ENCODE measurements at regions of chr10 and their contacts with region 1.

Region 1: DNA sequence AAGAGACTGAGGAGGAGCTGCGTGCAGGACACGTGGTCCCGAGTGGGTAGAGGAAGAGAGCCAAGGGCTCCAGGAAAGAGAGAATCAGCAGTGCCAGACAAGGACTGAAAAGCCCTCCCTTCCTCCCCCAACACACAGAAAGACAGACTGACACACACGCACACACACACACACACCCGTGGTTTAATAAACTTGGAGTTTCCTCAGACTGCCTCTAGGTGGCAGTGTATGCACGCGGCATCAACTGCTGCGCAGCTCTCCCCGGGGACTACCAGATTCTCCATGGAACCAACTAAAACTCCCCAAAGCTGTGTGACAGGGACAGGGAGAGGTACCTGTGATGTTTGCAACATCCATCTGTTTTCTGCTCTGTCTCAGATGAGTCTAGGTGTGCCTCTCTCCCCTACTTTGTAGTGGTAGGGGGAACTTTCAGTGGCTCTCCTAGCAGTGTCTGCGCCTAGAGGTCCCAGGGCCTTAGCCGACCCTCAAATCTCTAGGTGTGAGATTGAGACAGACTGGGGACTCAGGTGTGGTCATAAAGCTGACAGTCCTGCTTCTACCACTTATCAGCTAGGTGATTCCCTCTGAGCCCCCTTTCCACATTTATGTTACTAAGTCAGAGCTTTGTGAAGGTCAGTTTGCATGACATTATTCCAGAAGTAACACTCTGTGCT is 9.3 kb upstream of the TSPAN14 start:
- DNase-seq: peak; percentile 66
- H3K4me3 Mint-ChIP-seq: no peak overlapping the region
- H3K27ac Mint-ChIP-seq: no peak overlapping the region
- H3K4me1 Mint-ChIP-seq: peaks cover 10% of the 10 kb centered on the region
- H3K27me3 Mint-ChIP-seq: no peaks in the 10 kb centered on the region
- CTCF ChIP-seq: peak; percentile 77

Region 2: DNA sequence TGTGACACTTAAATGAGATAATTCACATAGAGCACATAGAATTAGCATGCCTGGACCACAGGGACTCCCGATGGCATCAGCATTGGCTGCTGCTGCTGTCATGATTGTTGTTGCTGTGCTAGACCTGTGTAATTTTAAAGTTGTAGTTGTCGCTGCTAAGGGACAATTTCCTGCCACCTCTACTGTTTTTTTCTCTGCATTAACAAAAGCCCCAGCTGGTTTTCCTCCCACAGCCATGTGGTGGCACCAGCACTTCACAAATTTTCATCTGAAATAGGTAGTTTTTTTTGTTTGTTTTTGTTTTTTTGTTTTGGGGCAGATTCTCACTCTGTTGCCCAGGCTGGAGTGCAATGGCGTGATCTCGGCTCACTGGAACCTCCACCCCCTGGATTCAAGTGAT is 61.8 kb before region 1 on chr10:
- CTCF ChIA-PET with region 1: interaction called, 219 read pairs
- POLR2A ChIA-PET with region 1: interaction called, 3 read pairs
- intact Hi-C with region 1: loop called (anchors 1 kb)
- DNase-seq: peak; percentile 57
- H3K4me3 Mint-ChIP-seq: no peak overlapping the region
- H3K27ac Mint-ChIP-seq: no peak overlapping the region
- H3K4me1 Mint-ChIP-seq: peaks cover 5% of the 10 kb centered on the region
- H3K27me3 Mint-ChIP-seq: no peaks in the 10 kb centered on the region
- CTCF ChIP-seq: peak; percentile 75

Region 3: GRCh38 chr10:80421707-80422536 is 22.9 kb before region 1 on chr10:
- CTCF ChIA-PET with region 1: interaction called, 23 read pairs
- POLR2A ChIA-PET with region 1: interaction called, 4 read pairs
- intact Hi-C with region 1: no loop called
- DNase-seq: no peak
- H3K4me3 Mint-ChIP-seq: no peak overlapping the region
- H3K27ac Mint-ChIP-seq: no peak overlapping the region
- H3K4me1 Mint-ChIP-seq: no peaks in the 10 kb centered on the region
- H3K27me3 Mint-ChIP-seq: no peaks in the 10 kb centered on the region
- CTCF ChIP-seq: no peak

Region 4: GRCh38 chr10:80472234-80473095 is 27.7 kb after region 1 on chr10:
- CTCF ChIA-PET with region 1: interaction called, 19 read pairs
- POLR2A ChIA-PET with region 1: interaction called, 3 read pairs
- intact Hi-C with region 1: no loop called
- DNase-seq: peak; percentile 93
- H3K4me3 Mint-ChIP-seq: peak overlapping the region; percentile 38
- H3K27ac Mint-ChIP-seq: peak overlapping the region; percentile 99
- H3K4me1 Mint-ChIP-seq: peaks cover 55% of the 10 kb centered on the region
- H3K27me3 Mint-ChIP-seq: no peaks in the 10 kb centered on the region
- CTCF ChIP-seq: no peak

Region 5: GRCh38 chr10:80504158-80504811 is 59.5 kb after region 1 on chr10:
- CTCF ChIA-PET with region 1: interaction called, 923 read pairs
- POLR2A ChIA-PET with region 1: interaction called, 8 read pairs
- intact Hi-C with region 1: loop called (anchors 1 kb)
- DNase-seq: no peak
- H3K4me3 Mint-ChIP-seq: no peak overlapping the region
- H3K27ac Mint-ChIP-seq: peak overlapping the region; percentile 86
- H3K4me1 Mint-ChIP-seq: peaks cover 68% of the 10 kb centered on the region
- H3K27me3 Mint-ChIP-seq: no peaks in the 10 kb centered on the region
- CTCF ChIP-seq: no peak

Region 6: DNA sequence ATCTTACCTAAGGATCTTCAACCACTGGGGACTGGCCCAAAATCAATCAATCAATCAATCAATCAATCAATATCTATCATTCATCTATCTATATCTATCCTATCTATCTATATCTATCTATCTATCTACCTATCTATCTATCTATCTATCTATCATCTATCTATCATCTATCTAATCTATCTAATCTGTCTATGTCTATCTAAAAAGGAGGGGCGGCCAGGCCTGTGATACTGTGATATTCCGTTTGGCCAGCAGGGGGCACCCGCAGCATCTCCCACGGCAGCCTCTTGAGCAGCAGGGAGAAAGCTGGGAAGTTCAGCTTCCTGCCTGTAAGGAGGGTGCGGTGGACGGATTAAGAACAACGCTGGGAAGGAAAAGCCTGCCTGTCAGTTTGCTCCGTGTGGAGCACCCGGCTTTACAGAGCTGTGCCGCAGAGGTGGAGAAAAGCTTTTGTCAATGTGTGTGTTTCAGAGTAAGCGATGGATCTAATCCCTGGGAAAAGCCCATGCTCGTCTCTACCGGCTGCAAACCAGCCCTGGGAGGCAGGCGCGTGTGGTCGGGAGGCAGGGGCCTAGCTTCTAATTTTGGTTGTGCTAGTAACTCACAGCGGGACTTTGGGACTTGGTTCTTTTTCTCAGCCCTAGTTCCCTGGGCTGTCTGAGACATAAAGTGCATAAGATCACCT is 217.9 kb after region 1 on chr10:
- CTCF ChIA-PET with region 1: interaction called, 39 read pairs
- POLR2A ChIA-PET with region 1: no interaction called
- intact Hi-C with region 1: loop called (anchors 1 kb)
- DNase-seq: peak; percentile 74
- H3K4me3 Mint-ChIP-seq: no peak overlapping the region
- H3K27ac Mint-ChIP-seq: no peak overlapping the region
- H3K4me1 Mint-ChIP-seq: no peaks in the 10 kb centered on the region
- H3K27me3 Mint-ChIP-seq: peaks cover 19% of the 10 kb centered on the region
- CTCF ChIP-seq: peak; percentile 81

Region 7: DNA sequence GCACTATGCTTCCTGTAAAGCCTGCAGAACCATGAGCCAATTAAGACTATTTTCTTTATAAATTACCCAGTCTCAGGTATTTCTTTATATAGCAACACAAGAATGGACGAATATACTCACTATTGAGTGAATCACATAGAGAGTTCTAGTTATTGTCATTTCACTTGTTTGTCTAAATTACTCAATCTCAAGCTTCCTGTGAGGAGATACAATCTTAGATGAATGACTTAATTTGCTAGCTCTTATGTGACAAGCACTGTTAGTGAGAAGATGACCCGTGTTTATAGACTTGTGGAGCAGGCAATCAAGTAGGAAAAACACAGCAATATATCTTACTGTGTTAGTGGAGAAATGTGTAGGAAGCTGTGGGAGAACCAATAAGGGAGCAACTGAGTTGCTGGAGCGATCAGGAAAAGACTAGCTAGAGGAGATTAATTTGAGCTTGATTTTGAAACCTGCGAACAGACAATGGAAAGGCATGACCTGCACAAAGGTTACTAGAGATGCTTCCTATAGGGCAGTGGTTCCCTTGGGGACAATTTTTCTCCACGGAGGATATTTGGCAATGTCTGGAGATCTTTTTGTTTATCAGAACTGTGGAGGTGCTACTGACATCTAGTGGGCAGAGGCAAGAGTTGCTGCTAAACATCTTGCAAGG is 574.1 kb after region 1 on chr10:
- CTCF ChIA-PET with region 1: interaction called, 15 read pairs
- POLR2A ChIA-PET with region 1: no interaction called
- intact Hi-C with region 1: no loop called
- DNase-seq: peak; percentile 64
- H3K4me3 Mint-ChIP-seq: no peak overlapping the region
- H3K27ac Mint-ChIP-seq: no peak overlapping the region
- H3K4me1 Mint-ChIP-seq: peaks cover 7% of the 10 kb centered on the region
- H3K27me3 Mint-ChIP-seq: peaks cover 29% of the 10 kb centered on the region
- CTCF ChIP-seq: peak; percentile 77